ENCODE measurements at regions of chr15 and their contacts with region 1.

Region 1: DNA sequence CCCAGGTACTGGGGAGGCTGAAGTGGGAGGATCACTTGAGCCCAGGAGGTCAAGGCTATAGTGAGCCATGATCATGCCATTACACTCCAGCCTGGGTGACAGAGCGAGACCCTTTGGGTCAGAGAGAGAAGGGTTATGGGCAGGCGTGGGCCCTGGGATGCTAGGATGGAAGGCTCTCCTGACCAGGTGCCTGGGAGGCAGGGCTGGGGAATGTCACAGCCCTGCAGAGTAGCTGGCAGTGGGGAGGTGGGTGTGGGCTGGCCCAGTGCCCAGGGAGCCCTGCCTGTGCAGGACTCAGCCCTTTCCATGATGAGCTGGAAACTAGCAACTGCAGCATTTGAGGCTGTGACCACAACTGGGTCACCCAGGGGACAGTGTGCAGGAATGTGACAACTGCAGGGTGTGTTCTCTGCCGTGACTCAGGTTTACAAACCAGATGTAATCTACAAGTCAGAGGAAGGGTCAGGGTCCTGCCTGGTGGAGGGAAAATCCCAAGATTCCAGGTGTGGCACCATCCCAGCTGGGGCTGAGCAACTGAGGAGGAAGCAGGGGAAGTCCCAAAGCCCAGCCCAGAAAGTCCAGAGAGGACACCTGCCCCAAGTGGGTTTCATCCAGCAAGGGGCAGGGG is 45.4 kb downstream of the SLC28A1 start:
- DNase-seq: no peak
- H3K4me3 ChIP-seq: no peak overlapping the region
- H3K27ac ChIP-seq: no peak overlapping the region
- H3K4me1 ChIP-seq: peaks cover 0 to 19% (median 11%) of the 10 kb centered on the region in 4 donors
- H3K27me3 ChIP-seq: no peaks in the 10 kb centered on the region
- CTCF ChIP-seq: no peak

Region 2: GRCh38 chr15:84588053-84588874 is 341.6 kb before region 1 on chr15:
- intact Hi-C with region 1: loop called (anchors 10 kb)
- DNase-seq: peak; percentile 84 to 87
- H3K4me3 ChIP-seq: peak overlapping the region; percentile 36 to 39
- H3K27ac ChIP-seq: no peak overlapping the region
- H3K4me1 ChIP-seq: peaks cover 0 to 9% (median 7%) of the 10 kb centered on the region in 4 donors
- H3K27me3 ChIP-seq: no peaks in the 10 kb centered on the region
- CTCF ChIP-seq: peak; percentile 62 to 96

Region 3: GRCh38 chr15:84855136-84855535 is 74.7 kb before region 1 on chr15:
- intact Hi-C with region 1: no loop called
- DNase-seq: no peak
- H3K4me3 ChIP-seq: no peak overlapping the region
- H3K27ac ChIP-seq: no peak overlapping the region
- H3K4me1 ChIP-seq: peaks cover 0 to 5% (median 2%) of the 10 kb centered on the region in 4 donors
- H3K27me3 ChIP-seq: no peaks in the 10 kb centered on the region
- CTCF ChIP-seq: no peak

Region 4: GRCh38 chr15:84871428-84872305 is 58.2 kb before region 1 on chr15:
- intact Hi-C with region 1: no loop called
- DNase-seq: no peak
- H3K4me3 ChIP-seq: no peak overlapping the region
- H3K27ac ChIP-seq: peak overlapping the region; percentile 63 to 65
- H3K4me1 ChIP-seq: peaks cover 0 to 31% (median 18%) of the 10 kb centered on the region in 4 donors
- H3K27me3 ChIP-seq: no peaks in the 10 kb centered on the region
- CTCF ChIP-seq: no peak

Region 5: GRCh38 chr15:85044251-85044853 is 114.5 kb after region 1 on chr15:
- intact Hi-C with region 1: no loop called
- DNase-seq: peak in 1 of 2 donors; percentile 61
- H3K4me3 ChIP-seq: no peak overlapping the region
- H3K27ac ChIP-seq: no peak overlapping the region
- H3K4me1 ChIP-seq: peaks cover 0 to 11% (median 4%) of the 10 kb centered on the region in 4 donors
- H3K27me3 ChIP-seq: no peaks in the 10 kb centered on the region
- CTCF ChIP-seq: peak; percentile 69 to 73

Region 6: GRCh38 chr15:85142312-85142711 is 212.5 kb after region 1 on chr15:
- intact Hi-C with region 1: no loop called
- DNase-seq: no peak
- H3K4me3 ChIP-seq: no peak overlapping the region
- H3K27ac ChIP-seq: no peak overlapping the region
- H3K4me1 ChIP-seq: peaks cover 0 to 11% (median 3%) of the 10 kb centered on the region in 4 donors
- H3K27me3 ChIP-seq: no peaks in the 10 kb centered on the region
- CTCF ChIP-seq: no peak

Measured in tibial artery (tissue), 4 donors.